Psoas muscle (tissue), 8 donors: ENCODE measurements at regions of chr20 and their contacts with region 1.

Region 1: DNA sequence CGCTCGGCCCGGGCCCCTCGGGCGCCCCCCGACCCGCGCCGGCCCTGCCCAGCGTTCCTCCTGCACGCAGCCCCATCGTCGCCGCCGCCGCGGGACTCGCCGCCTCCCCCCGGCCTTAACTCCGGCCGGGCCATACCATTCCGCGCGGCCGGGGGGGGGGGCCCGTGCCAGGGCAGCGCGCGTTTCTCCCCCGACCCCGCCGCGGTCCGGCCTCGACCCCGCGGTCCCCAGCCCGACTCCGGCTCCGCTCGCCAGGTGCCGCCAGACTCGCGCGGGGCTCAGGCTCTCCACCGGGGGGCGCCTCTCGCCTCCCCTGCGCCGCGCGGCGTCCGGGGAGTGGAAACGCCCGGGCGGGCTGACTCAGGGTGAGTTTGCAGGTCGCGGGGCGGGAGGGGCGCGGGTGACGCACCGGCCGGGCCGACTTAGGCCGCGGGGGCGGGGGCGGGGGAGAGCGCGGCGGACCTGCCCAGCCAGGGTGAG is at the start of gene SRXN1:
- DNase-seq: peak; percentile 95 to 97
- ATAC-seq: peak; percentile 95 to 97 (median 96)
- H3K4me3 ChIP-seq: peak within 1 kb of the TSS; percentile 85
- H3K27ac ChIP-seq: peak within 1 kb of the TSS; percentile 89
- H3K4me1 ChIP-seq: peaks cover 11% of the 10 kb centered on the region
- H3K27me3 ChIP-seq: peaks cover 0 to 3% (median 0%) of the 10 kb centered on the region in 3 donors
- CTCF ChIP-seq: peak; percentile 65
- total RNA-seq, gene SRXN1: 30.7 to 150 (median 57.0) TPM

Region 2: GRCh38 chr20:483813-484644 is 169.1 kb before region 1 on chr20:
- intact Hi-C with region 1: loop called in 1 of 2 experiments (anchors 10 kb)
- DNase-seq: peak in 1 of 2 donors; percentile 61
- ATAC-seq: peak; percentile 38 to 82 (median 62)
- H3K4me3 ChIP-seq: no peak overlapping the region
- H3K27ac ChIP-seq: no peak overlapping the region
- H3K4me1 ChIP-seq: peaks cover 20% of the 10 kb centered on the region
- H3K27me3 ChIP-seq: no peaks in the 10 kb centered on the region
- CTCF ChIP-seq: no peak

Region 3: DNA sequence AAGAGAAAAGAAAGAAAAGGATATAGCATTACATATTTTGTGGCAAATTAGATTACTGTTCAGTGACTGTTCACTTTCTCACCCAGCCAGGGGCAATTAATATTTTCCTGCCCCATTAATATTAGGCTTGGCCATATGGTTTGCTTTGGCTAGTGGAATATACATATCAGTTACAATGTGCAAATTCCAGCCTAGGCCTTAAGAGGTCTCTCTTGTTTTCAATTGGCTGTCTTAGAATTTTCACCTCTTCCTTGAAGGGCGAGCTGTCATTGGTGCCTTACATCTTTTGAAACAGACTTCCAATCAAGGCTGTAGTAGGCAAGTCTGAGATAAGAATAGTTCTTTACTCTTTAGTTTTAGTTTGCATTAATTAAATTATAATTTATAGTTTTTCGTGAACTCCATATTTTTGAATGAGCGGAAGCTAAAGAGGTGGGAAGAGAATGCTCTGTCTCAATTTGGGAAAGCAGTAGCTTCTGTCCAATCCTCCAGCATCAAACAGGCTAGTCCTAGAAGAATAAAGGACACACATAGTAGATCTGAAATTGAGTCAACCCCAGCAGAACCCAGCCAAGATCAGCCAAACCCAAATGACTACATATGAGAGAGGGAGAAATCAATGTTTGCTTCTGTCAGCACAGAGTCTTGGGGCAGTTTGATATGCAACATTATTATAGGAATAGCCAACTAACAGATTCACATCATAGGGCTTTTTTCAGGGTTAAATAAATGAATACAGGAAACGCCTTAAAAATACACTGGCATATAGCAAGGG is 103.2 kb before region 1 on chr20:
- intact Hi-C with region 1: loop called in 1 of 2 experiments (anchors 5 kb)
- DNase-seq: no peak
- ATAC-seq: no peak
- H3K4me3 ChIP-seq: no peak overlapping the region
- H3K27ac ChIP-seq: no peak overlapping the region
- H3K4me1 ChIP-seq: no peaks in the 10 kb centered on the region
- H3K27me3 ChIP-seq: peaks cover 0 to 15% (median 0%) of the 10 kb centered on the region in 3 donors
- CTCF ChIP-seq: no peak

Region 4: GRCh38 chr20:695165-695866 is 42.2 kb after region 1 on chr20:
- intact Hi-C with region 1: no loop called
- DNase-seq: no peak
- ATAC-seq: no peak
- H3K4me3 ChIP-seq: no peak overlapping the region
- H3K27ac ChIP-seq: no peak overlapping the region
- H3K4me1 ChIP-seq: peaks cover 3% of the 10 kb centered on the region
- H3K27me3 ChIP-seq: peaks cover 0 to 1% (median 0%) of the 10 kb centered on the region in 3 donors
- CTCF ChIP-seq: no peak

Region 5: GRCh38 chr20:709423-709822 is 56.3 kb after region 1 on chr20:
- intact Hi-C with region 1: no loop called
- DNase-seq: peak in 1 of 2 donors; percentile 34
- ATAC-seq: no peak
- H3K4me3 ChIP-seq: peak overlapping the region; percentile 39
- H3K27ac ChIP-seq: no peak overlapping the region
- H3K4me1 ChIP-seq: no peaks in the 10 kb centered on the region
- H3K27me3 ChIP-seq: peaks cover 0 to 34% (median 9%) of the 10 kb centered on the region in 3 donors
- CTCF ChIP-seq: no peak

Region 6: GRCh38 chr20:728248-728944 is 75.2 kb after region 1 on chr20:
- intact Hi-C with region 1: loop called in 1 of 2 experiments (anchors 5 kb)
- DNase-seq: peak; percentile 41 to 64
- ATAC-seq: peak; percentile 77 to 90 (median 78)
- H3K4me3 ChIP-seq: peak overlapping the region; percentile 71
- H3K27ac ChIP-seq: no peak overlapping the region
- H3K4me1 ChIP-seq: peaks cover 5% of the 10 kb centered on the region
- H3K27me3 ChIP-seq: peaks cover 0 to 42% (median 9%) of the 10 kb centered on the region in 3 donors
- CTCF ChIP-seq: peak; percentile 69

Region 7: GRCh38 chr20:833450-834150 is 180.4 kb after region 1 on chr20 and contains the start of gene FAM110A:
- intact Hi-C with region 1: loop called in 1 of 2 experiments (anchors 10 kb)
- DNase-seq: peak; percentile 97 to 98
- ATAC-seq: peak; percentile 91 to 95 (median 92)
- H3K4me3 ChIP-seq: peak within 1 kb of the TSS; percentile 78
- H3K27ac ChIP-seq: peak within 1 kb of the TSS; percentile 79
- H3K4me1 ChIP-seq: peaks cover 46% of the 10 kb centered on the region
- H3K27me3 ChIP-seq: no peaks in the 10 kb centered on the region
- CTCF ChIP-seq: no peak
- total RNA-seq, gene FAM110A: 0.83 to 3.4 (median 1.9) TPM

Region 8: DNA sequence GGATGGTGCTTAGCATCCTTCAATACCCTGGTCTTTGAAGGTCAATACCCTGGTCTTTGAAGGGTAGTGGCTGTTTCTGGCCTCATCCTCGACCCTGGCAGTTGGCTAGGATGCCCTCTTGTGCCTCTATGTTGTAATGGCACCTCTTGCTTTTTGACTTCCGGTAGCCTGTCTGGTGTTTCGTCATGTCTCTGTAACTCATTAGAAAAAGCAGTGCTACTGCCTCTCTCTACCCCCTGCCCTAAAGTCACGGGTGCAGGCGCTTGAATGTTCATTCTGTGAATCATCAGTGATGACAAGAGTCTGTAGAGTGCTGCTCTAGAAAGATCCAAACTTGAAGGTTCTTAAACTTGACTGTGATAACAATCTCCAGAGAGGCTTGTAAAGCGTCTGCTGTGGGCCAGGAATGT is 320.6 kb after region 1 on chr20:
- intact Hi-C with region 1: no loop called
- DNase-seq: no peak
- ATAC-seq: peak in 1 of 4 donors; percentile 40
- H3K4me3 ChIP-seq: no peak overlapping the region
- H3K27ac ChIP-seq: no peak overlapping the region
- H3K4me1 ChIP-seq: no peaks in the 10 kb centered on the region
- H3K27me3 ChIP-seq: peaks cover 0 to 7% (median 0%) of the 10 kb centered on the region in 3 donors
- CTCF ChIP-seq: no peak

Region 9: DNA sequence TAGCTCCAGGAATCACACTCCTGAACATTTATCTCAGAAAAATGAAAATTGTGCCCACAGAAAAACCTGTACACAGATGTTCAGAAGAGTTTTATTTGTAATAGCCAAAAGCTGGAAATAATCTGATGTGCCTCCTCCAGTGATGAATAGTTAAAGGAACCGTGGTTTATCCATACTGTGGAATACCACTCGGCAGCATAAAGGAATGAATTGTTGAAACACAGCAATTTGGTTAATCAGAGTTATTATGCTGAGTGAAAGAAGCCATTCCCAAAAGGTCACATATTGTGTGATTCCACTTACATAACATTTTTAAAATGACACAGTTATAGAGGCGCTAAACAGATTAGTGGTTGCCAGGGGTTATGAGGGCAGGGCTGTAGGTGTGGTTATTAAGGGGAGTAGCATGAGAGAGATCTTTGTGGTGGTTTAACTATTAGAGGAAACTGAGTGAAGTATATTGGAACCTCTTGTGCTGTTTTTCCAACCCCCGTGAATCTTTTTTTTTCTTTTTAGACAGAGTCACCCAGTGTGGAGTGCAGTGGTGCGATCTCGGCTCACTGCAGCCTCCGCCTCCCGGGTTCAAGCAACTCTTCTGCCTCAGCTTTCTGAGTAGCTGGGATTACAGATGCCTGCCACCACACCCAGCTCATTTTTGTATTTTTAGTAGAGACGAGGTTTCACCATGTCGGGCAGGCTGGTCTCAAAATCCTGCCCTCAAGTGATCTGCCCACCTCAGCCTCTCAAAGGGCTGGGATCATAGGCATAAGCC is 491.4 kb after region 1 on chr20:
- intact Hi-C with region 1: no loop called
- DNase-seq: no peak
- ATAC-seq: no peak
- H3K4me3 ChIP-seq: no peak overlapping the region
- H3K27ac ChIP-seq: no peak overlapping the region
- H3K4me1 ChIP-seq: no peaks in the 10 kb centered on the region
- H3K27me3 ChIP-seq: no peaks in the 10 kb centered on the region
- CTCF ChIP-seq: no peak